ENCODE measurements at regions of chr1 and their contacts with region 1.

Region 1: DNA sequence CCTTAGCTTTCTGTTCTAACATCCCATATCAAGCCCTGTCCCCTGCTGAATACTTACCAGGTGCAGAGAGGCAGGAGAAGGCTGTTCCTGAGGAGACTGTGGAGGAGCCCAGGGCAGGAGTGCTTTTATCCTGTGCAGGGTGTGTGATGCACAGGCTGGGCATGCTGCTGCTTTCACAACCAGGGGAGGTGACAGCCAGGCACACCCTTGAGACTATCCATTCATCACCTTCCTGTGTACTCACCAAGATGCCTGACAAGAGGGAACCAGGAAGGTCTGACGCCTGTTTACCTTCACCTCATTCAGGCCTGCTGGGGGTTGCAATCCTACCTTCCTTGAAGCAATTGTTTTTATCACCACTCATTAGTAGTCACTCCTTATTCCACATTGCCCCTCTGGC is at the start of gene LCE3E:
- DNase-seq: no peak
- ATAC-seq: no peak
- H3K4me3 ChIP-seq: no peak within 1 kb of the TSS
- H3K27ac ChIP-seq: no peak within 1 kb of the TSS
- H3K4me1 ChIP-seq: no peaks in the 10 kb centered on the region
- H3K27me3 ChIP-seq: no peaks in the 10 kb centered on the region
- CTCF ChIP-seq: no peak
- EP300 ChIP-seq: no peak
- POLR2A ChIP-seq: no peak
- RAD21 ChIP-seq: no peak
- total RNA-seq, gene LCE3E: not detected in 2 replicates

Region 2: DNA sequence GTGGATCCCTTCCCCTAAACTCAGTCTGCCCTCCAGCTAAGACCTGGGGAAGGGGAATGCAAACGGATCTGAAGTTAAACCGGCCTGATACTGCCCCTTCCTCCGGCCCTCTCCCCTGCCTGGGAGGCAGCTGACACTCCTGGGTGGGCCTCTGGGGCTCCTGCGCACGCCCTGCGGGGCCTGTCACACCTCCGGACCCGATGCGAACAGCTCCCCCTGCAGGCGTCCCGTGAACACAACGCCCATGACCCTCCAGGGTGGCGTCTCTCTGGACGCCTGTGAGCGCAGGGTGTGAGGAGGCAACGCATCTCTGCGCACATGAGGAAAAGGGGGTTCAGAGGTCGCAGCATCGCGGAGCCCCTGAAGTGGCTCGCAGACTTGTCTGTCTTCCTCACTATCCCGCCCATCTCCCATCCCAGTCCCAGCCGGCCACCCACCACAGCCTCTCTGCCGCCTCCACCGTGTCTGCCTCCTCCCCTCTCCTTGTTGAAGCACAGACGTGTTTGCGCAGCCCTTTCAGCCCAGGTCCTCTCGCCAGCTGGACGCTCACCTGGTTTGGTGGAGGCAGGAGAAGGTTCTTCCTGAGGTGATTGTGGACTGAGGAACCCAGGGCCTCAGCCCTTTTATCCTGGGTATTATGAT is 56.6 kb after region 1 on chr1:
- CTCF ChIA-PET with region 1: no interaction called
- POLR2A ChIA-PET with region 1: no interaction called
- in situ Hi-C with region 1: loop called (anchors 5 kb)
- intact Hi-C with region 1: no loop called
- DNase-seq: peak; percentile 9
- ATAC-seq: peak; percentile 92
- H3K4me3 ChIP-seq: no peak overlapping the region
- H3K27ac ChIP-seq: no peak overlapping the region
- H3K4me1 ChIP-seq: no peaks in the 10 kb centered on the region
- H3K27me3 ChIP-seq: peaks cover 0 to 8% of the 10 kb centered on the region in 2 experiments; a peak in 1 of 5 replicates
- CTCF ChIP-seq: peak; percentile 48
- EP300 ChIP-seq: no peak
- POLR2A ChIP-seq: no peak
- RAD21 ChIP-seq: no peak